Psoas muscle (tissue), 8 donors: ENCODE measurements at regions of chr2 and their contacts with region 1.

Region 1: DNA sequence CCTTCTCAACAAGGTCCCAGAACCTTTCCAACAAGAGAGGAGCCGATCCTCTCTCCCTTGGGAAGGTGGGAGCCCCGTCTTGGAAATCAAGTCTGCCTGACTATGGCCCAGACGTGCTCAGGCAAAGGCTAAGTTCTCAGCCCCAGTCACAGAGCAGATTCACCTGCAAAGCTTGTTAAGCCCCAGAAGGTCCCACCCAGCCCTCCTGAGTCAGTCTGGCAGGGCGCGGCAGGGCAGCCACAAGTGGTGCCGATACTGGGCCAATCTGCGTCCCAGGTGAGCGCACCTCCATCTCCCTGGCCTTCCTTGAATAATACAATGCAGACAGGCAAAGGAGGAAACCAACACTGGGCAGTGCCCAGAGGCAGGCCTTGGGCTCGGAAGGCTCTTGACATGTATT is 15.0 kb downstream of the CRACDL start:
- DNase-seq: no peak
- ATAC-seq: no peak
- H3K4me3 ChIP-seq: no peak overlapping the region
- H3K27ac ChIP-seq: no peak overlapping the region
- H3K4me1 ChIP-seq: no peaks in the 10 kb centered on the region
- H3K27me3 ChIP-seq: no peaks in the 10 kb centered on the region
- CTCF ChIP-seq: no peak

Region 2: DNA sequence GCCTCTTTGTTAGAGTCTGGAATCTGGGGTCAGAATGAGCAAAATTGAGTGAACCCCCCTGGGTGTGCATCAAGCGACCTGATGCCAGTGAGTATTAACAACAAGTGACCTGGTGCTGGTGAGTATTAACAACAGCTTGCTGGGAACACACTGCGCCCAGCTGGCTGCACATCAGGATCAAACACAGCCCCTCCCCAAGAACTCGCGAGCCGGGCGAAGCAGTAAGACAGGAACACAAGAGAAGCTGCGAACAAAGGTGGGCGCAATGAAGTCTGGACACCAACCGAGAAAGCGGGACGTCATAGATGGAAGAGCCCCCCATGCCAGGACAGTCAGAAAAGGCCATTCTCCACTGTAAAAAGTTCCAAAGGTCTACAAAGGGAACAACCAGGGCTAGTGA is 19.4 kb before region 1 on chr2:
- intact Hi-C with region 1: loop called in 1 of 2 experiments (anchors 2 kb)
- DNase-seq: no peak
- ATAC-seq: no peak
- H3K4me3 ChIP-seq: no peak overlapping the region
- H3K27ac ChIP-seq: no peak overlapping the region
- H3K4me1 ChIP-seq: no peaks in the 10 kb centered on the region
- H3K27me3 ChIP-seq: no peaks in the 10 kb centered on the region
- CTCF ChIP-seq: no peak